Gastrocnemius medialis (tissue), 4 donors: ENCODE measurements at regions of chr14 and their contacts with region 1.

Region 1: DNA sequence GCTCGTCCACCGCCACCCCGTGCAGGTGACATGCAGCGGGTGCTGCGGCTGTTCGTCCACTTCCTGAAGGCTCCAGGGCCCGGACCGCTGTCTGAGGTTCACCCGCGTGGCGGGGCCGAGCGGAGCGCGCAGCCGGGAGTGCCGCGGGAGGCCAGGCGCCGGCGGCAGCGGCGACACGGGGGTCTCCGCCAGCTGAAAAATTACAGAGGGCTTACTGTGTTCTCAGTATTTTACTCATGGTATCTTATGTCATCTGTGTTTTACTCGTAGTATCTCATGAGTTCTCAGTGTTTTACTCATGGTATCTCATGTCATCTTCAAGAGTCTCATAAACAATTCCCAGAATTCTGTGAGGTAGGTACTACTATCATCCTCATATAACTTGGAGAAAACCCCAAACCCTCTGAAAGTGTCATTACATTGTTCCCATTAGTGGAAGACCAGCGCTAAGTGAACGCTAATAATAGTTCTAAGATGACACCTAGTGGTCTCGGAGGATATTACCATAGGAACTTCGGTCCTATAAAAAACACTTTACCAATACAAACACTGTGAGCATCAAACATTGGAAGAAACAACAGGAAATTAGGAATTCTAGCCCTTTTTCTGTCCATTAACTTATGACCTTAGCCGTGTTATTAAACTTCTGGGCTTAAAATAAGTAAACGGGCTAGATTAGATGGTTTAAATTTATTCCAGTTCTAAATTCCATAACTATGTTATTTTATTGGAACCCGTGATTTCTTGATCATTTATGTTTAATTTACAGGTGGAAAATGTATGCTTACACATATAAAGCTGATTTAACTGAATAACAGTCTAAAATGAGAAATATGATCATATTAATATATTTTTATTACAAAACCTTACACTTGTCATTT is 32.4 kb downstream of the AK7 start:
- DNase-seq: no peak
- ATAC-seq: peak; percentile 84 to 89
- H3K4me3 ChIP-seq: peak overlapping the region; percentile 27 to 51 (median 42)
- H3K27ac ChIP-seq: no peak overlapping the region
- H3K4me1 ChIP-seq: no peaks in the 10 kb centered on the region
- H3K27me3 ChIP-seq: no peaks in the 10 kb centered on the region
- CTCF ChIP-seq: peak; percentile 60 to 82 (median 73)
- POLR2A ChIP-seq: no peak

Region 2: GRCh38 chr14:96297000-96297399 is 127.3 kb before region 1 on chr14:
- in situ Hi-C with region 1: loop called (anchors 10 kb)
- intact Hi-C with region 1: loop called (anchors 2 kb)
- DNase-seq: no peak
- ATAC-seq: no peak
- H3K4me3 ChIP-seq: no peak overlapping the region
- H3K27ac ChIP-seq: no peak overlapping the region
- H3K4me1 ChIP-seq: no peaks in the 10 kb centered on the region
- H3K27me3 ChIP-seq: no peaks in the 10 kb centered on the region
- CTCF ChIP-seq: peak in 3 of 5 experiments; percentile 17 to 52 (median 48)
- POLR2A ChIP-seq: no peak

Region 3: DNA sequence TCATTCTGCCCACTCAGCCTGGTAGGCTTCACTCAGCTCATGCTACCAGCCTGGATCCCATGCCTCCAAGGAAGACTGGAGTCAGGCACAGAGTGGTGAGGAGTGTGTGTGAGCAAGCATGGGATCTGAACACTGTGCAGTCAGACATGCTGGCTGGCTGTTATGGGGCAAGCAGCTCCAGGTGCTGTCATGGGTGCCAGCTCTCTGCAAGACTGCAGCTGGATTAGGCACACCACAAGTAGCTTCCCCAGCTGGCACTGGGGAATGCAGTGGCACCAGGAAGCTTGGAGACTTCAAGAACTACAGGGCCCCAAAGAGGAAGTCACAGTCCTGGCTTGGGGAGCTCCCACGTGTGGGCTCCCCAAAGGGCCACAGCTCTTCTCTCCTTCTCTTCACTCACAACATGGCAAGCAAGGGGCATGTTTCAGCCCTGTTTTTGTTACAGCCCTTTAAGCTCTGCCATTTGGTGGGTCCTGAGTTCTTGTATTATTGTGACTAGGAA is 575.4 kb after region 1 on chr14:
- in situ Hi-C with region 1: no loop called
- intact Hi-C with region 1: no loop called
- DNase-seq: no peak
- ATAC-seq: no peak
- H3K4me3 ChIP-seq: no peak overlapping the region
- H3K27ac ChIP-seq: no peak overlapping the region
- H3K4me1 ChIP-seq: no peaks in the 10 kb centered on the region
- H3K27me3 ChIP-seq: no peaks in the 10 kb centered on the region
- CTCF ChIP-seq: no peak
- POLR2A ChIP-seq: no peak